IMR-90 (cell line): ENCODE measurements at regions of chr10 and their contacts with region 1.

Region 1: DNA sequence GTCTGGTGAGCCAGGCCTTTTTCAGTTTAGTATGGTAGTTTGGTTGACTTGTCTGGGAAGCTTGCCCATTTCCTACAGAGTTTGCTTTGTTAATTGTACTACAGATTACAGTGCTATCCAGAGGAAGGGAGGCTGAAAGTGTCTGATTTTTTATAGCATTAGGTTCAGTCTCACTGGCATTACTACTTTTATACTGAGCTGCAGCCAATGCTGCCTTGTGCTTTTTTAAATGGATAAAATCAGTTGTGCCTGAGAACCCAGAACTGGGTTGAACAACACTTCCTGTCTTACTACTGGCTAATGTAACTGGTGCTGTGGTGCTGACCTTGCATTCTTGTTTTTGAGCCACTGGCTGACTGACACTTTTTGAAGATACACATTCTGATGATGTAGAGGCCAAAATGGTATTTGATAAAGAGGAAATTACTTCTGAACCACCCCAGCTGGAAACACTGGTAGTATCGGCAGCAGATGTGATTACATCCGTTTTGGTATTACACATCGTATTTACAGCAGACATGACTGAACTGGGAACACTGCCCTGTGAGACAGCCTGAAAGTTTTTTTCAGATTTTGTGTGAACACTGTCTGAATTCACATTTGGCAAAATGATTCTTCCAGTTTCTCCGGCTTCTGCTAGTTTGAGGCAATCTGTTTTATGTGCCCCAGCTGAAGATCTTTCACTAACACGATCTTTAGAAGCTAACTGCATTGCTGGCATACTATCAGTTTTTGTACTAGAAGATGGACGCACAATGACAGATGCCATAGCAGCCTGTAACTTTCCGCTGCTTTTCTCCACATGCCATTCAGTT is 74.1 kb downstream of the NRBF2 start:
- DNase-seq: peak; percentile 94
- ATAC-seq: peak; percentile 76
- H3K4me3 ChIP-seq: no peak overlapping the region; the same call in 1 of the 2 replicates
- H3K27ac ChIP-seq: peak overlapping the region; percentile 46; the same call in 1 of the 2 replicates
- H3K4me1 ChIP-seq: peaks cover 16% of the 10 kb centered on the region
- H3K27me3 ChIP-seq: no peaks in the 10 kb centered on the region
- CTCF ChIP-seq: no peak
- POLR2A ChIP-seq: no peak
- RAD21 ChIP-seq: no peak

Region 2: DNA sequence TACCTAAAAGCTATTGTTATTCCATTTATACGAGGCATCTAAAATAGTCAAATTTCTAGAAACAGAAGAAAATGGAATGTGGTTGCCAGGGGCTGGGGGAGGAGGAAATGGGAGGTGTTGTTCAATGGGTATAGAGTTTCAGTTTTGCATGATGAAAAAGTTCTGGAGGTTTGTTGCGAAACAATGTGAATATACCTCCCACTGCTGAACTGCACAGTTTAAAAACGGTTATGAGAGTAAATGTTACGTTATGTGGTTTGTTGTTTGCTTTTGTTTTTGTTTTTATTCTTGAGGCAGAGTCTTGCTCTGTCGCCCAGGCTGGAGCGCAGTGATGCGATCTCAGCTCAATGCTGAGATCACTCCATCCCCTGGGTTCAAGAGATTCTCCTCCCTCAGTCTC is 139.0 kb before region 1 on chr10:
- CTCF ChIA-PET with region 1: interaction called, 11 read pairs
- POLR2A ChIA-PET with region 1: no interaction called
- dilution Hi-C with region 1: no loop called
- in situ Hi-C with region 1: no loop called
- intact Hi-C with region 1: no loop called
- DNase-seq: no peak
- ATAC-seq: no peak
- H3K4me3 ChIP-seq: no peak overlapping the region
- H3K27ac ChIP-seq: no peak overlapping the region
- H3K4me1 ChIP-seq: no peaks in the 10 kb centered on the region
- H3K27me3 ChIP-seq: peaks cover 11% of the 10 kb centered on the region
- CTCF ChIP-seq: no peak
- POLR2A ChIP-seq: no peak
- RAD21 ChIP-seq: no peak